Activated CD4-positive, alpha-beta T cell treated with anti-CD3 and anti-CD28 coated beads for 36 hours (primary cell): ENCODE measurements at regions of chr14 and their contacts with region 1.

Region 1: GRCh38 chr14:61388173-61388975 is 67.0 kb downstream of the PRKCH start:
- DNase-seq: peak; percentile 71
- ATAC-seq: peak; percentile 81
- H3K4me3 Mint-ChIP-seq: no peak overlapping the region
- H3K27ac Mint-ChIP-seq: no peak overlapping the region
- H3K4me1 Mint-ChIP-seq: no peaks in the 10 kb centered on the region
- H3K27me3 Mint-ChIP-seq: no peaks in the 10 kb centered on the region

Region 2: DNA sequence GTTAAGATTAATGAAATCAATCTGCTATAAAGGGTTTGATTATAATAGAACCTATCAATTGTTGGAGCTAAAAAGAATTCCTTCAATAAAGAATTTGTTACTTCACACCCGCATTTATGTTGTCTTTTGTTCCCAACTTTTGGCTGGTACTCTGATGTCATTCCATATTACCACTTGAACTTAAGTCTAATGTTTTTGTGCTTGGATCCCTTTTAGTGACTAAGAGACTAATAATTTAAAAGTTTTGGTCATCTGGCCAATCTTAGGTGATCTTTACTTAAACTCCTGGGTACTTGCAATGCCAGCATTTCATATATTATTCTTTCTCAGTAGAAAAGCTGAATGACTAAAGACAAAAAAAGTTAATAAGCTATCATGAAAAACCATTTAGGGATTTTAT is 220.2 kb before region 1 on chr14:
- CTCF ChIA-PET with region 1: no interaction called
- POLR2A ChIA-PET with region 1: no interaction called
- intact Hi-C with region 1: no loop called
- DNase-seq: no peak
- ATAC-seq: no peak
- H3K4me3 Mint-ChIP-seq: no peak overlapping the region
- H3K27ac Mint-ChIP-seq: no peak overlapping the region
- H3K4me1 Mint-ChIP-seq: no peaks in the 10 kb centered on the region
- H3K27me3 Mint-ChIP-seq: peaks cover 15% of the 10 kb centered on the region

Region 3: DNA sequence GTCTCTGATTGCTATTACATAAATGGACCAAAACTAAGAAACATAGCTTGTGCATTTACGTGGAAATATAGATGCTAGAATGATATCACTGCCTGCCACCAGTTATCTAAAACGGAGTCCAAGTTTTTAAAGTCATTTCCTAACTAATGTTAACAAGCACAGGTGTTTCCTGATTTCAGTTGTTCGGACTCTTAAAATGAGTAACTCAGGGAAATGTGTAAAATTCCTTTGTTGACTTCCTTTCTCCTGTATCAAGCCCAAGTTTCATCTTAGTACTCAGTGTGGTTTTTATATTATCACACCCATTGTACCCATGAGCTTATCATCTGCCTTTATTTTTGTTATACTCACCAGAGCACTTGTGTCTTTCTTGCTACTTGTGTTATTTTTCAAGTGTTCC is 80.2 kb before region 1 on chr14:
- CTCF ChIA-PET with region 1: no interaction called
- POLR2A ChIA-PET with region 1: no interaction called
- intact Hi-C with region 1: no loop called
- DNase-seq: no peak
- ATAC-seq: no peak
- H3K4me3 Mint-ChIP-seq: no peak overlapping the region
- H3K27ac Mint-ChIP-seq: no peak overlapping the region
- H3K4me1 Mint-ChIP-seq: peaks cover 18% of the 10 kb centered on the region
- H3K27me3 Mint-ChIP-seq: no peaks in the 10 kb centered on the region

Region 4: DNA sequence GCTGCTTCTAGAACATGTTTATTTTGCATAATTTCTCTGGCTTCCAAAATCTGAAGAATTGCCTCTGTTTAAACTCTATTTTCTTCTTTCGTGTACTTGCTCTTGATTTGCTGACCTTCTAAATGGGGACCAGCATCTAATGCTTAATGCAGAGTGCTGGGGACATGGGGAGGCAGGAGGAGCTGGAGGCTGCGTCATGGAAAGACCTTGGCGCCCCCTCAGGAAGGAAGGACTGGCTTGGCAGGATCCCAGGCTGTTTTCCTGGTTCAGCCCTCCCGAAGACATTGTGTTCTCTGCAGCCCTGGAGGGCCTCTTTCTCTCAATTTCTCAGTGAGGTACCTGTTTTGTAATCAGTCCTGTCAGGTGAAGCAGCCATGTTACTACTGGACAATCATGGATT is 61.5 kb before region 1 on chr14:
- CTCF ChIA-PET with region 1: interaction called, 5 read pairs
- POLR2A ChIA-PET with region 1: interaction called, 5 read pairs
- intact Hi-C with region 1: loop called (anchors 1 kb)
- DNase-seq: no peak
- ATAC-seq: no peak
- H3K4me3 Mint-ChIP-seq: peak overlapping the region; percentile 92
- H3K27ac Mint-ChIP-seq: peak overlapping the region; percentile 94
- H3K4me1 Mint-ChIP-seq: peaks cover 71% of the 10 kb centered on the region
- H3K27me3 Mint-ChIP-seq: no peaks in the 10 kb centered on the region

Region 5: GRCh38 chr14:61347826-61348443 is 40.4 kb before region 1 on chr14:
- CTCF ChIA-PET with region 1: interaction called, 11 read pairs
- POLR2A ChIA-PET with region 1: interaction called, 10 read pairs
- intact Hi-C with region 1: loop called (anchors 2 kb)
- DNase-seq: peak; percentile 63
- ATAC-seq: peak; percentile 11
- H3K4me3 Mint-ChIP-seq: peak overlapping the region; percentile 86
- H3K27ac Mint-ChIP-seq: peak overlapping the region; percentile 99
- H3K4me1 Mint-ChIP-seq: peaks cover 98% of the 10 kb centered on the region
- H3K27me3 Mint-ChIP-seq: no peaks in the 10 kb centered on the region

Region 6: DNA sequence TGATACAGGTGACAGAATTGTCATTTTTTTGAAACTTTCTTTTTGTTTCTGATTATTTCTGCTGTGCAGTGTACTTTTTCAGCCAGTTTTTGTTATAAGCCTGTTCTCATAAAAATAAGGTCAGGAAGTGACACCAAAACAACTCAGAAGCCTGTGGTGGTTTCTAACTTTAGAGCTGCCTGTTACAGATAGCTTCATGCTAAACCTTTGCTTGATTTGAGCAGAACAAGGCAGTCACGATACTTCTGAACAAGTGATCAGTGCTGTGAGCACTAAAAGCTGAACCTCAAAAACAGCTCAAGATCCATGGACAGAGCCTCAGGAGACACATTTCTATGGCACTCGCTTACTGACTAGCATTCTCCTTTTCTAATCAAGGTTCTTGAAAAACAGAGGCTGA is 15.0 kb after region 1 on chr14:
- CTCF ChIA-PET with region 1: interaction called, 13 read pairs
- POLR2A ChIA-PET with region 1: interaction called, 4 read pairs
- intact Hi-C with region 1: loop called (anchors 1 to 2 kb)
- DNase-seq: no peak
- ATAC-seq: peak; percentile 67
- H3K4me3 Mint-ChIP-seq: peak overlapping the region; percentile 48
- H3K27ac Mint-ChIP-seq: peak overlapping the region; percentile 86
- H3K4me1 Mint-ChIP-seq: peaks cover 86% of the 10 kb centered on the region
- H3K27me3 Mint-ChIP-seq: no peaks in the 10 kb centered on the region

Region 7: GRCh38 chr14:61438860-61439684 is 50.7 kb after region 1 on chr14:
- CTCF ChIA-PET with region 1: no interaction called
- POLR2A ChIA-PET with region 1: no interaction called
- intact Hi-C with region 1: loop called (anchors 2 kb)
- DNase-seq: peak; percentile 63
- ATAC-seq: peak; percentile 54
- H3K4me3 Mint-ChIP-seq: peak overlapping the region; percentile 68
- H3K27ac Mint-ChIP-seq: peak overlapping the region; percentile 87
- H3K4me1 Mint-ChIP-seq: peaks cover 92% of the 10 kb centered on the region
- H3K27me3 Mint-ChIP-seq: no peaks in the 10 kb centered on the region